T-cell (primary cell): ENCODE measurements at regions of chr14 and their contacts with region 1.

Region 1: DNA sequence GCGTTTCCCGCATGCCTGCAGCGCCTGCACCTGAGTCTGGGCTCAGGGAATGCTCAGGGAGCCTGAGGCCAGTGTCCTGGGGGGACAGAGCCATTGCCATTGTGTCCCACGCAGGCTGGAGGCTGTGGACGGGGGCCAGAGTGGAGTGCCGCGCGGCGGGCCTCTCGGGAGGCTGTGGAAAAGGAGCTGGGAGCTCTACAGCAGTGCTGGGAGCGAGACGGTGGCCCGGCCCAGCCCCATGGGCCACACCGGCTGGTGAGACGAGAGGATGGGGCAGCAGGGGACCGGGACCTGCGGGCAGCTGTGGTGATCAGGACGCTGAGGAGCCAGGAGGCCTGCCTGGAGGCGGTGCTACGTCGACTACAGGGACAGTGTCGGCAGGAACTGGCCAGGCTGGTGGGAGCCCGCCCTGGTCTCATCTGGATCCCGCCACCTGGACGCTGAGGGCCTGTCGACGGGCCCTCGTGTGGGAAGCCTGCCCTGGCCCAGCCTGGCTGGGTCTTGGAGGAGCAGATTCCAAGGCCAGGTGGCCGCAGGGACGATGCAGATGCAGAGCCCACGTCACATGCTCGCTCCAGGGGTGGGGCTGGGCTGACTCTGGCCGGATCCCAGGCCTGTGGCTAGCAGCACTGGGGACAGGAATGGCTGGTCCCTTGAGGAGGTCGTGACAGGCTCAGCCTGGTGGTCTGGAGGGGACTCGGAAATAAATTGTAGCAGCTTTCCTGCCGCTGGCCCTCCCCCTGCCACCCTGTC is 7.6 kb downstream of the TEDC1 start:
- DNase-seq: no peak
- ATAC-seq: peak in 1 of 4 experiments; percentile 6
- H3K4me3 ChIP-seq: no peak overlapping the region
- H3K4me3 Mint-ChIP-seq: no peak overlapping the region
- H3K27ac ChIP-seq: no peak overlapping the region
- H3K27ac Mint-ChIP-seq: no peak overlapping the region
- H3K4me1 ChIP-seq: no peaks in the 10 kb centered on the region
- H3K4me1 Mint-ChIP-seq: no peaks in the 10 kb centered on the region
- H3K27me3 ChIP-seq: no peaks in the 10 kb centered on the region
- H3K27me3 Mint-ChIP-seq: peaks cover 3% of the 10 kb centered on the region in 2 donors

Region 2: DNA sequence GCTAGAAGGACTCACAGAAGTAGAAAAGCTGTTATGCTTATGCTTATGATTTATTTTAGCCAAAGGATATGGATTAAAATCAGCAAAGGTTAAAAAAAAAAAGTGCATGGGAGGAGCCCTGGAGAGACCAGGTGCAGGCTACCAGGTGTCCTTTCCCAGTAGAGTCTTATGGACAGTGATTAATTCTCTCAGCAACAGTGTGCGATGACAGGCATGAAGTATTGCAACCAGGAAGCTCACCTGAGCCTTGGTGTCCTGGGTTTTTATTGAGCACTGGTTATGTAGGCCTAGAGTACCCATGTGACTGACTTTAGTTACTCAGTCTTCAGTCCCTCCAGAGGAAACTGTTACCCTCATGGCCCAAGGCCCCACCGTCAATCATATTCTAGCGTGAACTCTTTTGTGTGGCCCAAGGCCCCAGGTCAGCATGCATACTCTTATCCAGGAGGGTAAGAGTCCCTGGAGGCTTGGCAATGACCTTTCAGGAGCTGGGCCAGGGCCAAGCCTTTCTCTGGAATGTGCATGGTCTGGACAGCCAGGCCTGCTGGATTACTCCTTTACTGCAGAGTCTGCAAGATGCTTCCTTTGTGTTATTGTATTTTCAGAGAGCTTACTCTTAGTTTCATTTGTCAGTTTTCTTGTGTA is 1486.7 kb before region 1 on chr14:
- CTCF ChIA-PET with region 1: no interaction called
- POLR2A ChIA-PET with region 1: no interaction called
- DNase-seq: no peak
- ATAC-seq: no peak
- H3K4me3 ChIP-seq: no peak overlapping the region
- H3K4me3 Mint-ChIP-seq: no peak overlapping the region
- H3K27ac ChIP-seq: no peak overlapping the region
- H3K27ac Mint-ChIP-seq: no peak overlapping the region
- H3K4me1 ChIP-seq: no peaks in the 10 kb centered on the region
- H3K4me1 Mint-ChIP-seq: no peaks in the 10 kb centered on the region
- H3K27me3 ChIP-seq: peaks cover 0 to 9% of the 10 kb centered on the region in 2 experiments
- H3K27me3 Mint-ChIP-seq: peaks cover 15 to 20% of the 10 kb centered on the region in 2 donors

Region 3: GRCh38 chr14:105351920-105352851 is 146.5 kb before region 1 on chr14:
- CTCF ChIA-PET with region 1: no interaction called
- POLR2A ChIA-PET with region 1: no interaction called
- DNase-seq: peak; percentile 75 to 92 (median 85)
- ATAC-seq: peak; percentile 95 to 99 (median 99)
- H3K4me3 ChIP-seq: no peak overlapping the region
- H3K4me3 Mint-ChIP-seq: no peak overlapping the region
- H3K27ac ChIP-seq: no peak overlapping the region
- H3K27ac Mint-ChIP-seq: peak overlapping the region; percentile 20 to 68
- H3K4me1 ChIP-seq: peaks cover 0 to 5% of the 10 kb centered on the region in 2 experiments
- H3K4me1 Mint-ChIP-seq: peaks cover 0 to 3% (median 3%) of the 10 kb centered on the region in 3 donors
- H3K27me3 ChIP-seq: no peaks in the 10 kb centered on the region
- H3K27me3 Mint-ChIP-seq: no peaks in the 10 kb centered on the region

Region 4: DNA sequence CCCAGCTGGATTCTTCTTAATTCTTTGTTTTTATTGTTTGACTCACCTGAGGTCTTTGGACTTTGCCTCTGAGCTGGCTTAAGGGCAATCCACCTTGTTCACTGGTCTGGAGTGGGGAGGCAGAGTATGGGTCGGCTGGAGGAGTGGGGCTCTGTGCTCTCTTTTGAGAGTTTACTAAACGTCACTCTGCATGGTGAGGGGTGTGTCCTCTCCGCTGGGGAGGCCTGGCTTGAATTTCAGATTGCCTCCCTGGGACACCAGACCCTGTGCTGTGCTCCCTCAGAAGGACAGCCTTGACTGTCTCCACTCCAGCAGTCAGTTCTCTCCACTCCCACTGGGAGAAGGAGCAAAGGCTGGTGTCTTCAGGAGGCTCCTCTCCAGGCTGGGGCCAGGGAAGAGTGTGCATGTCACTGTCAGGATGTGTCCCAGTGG is 81.0 kb before region 1 on chr14:
- CTCF ChIA-PET with region 1: no interaction called
- POLR2A ChIA-PET with region 1: interaction called in 1 of 2 experiments, 11 read pairs
- DNase-seq: no peak
- ATAC-seq: no peak
- H3K4me3 ChIP-seq: no peak overlapping the region
- H3K4me3 Mint-ChIP-seq: peak overlapping the region; percentile 34 to 64 (median 37)
- H3K27ac ChIP-seq: no peak overlapping the region
- H3K27ac Mint-ChIP-seq: no peak overlapping the region
- H3K4me1 ChIP-seq: peaks cover 7 to 44% of the 10 kb centered on the region in 2 experiments
- H3K4me1 Mint-ChIP-seq: peaks cover 29 to 36% (median 29%) of the 10 kb centered on the region in 3 donors
- H3K27me3 ChIP-seq: peaks cover 0 to 45% of the 10 kb centered on the region in 2 experiments
- H3K27me3 Mint-ChIP-seq: peaks cover 5 to 12% of the 10 kb centered on the region in 2 donors

Region 5: GRCh38 chr14:105480952-105481801 is 17.5 kb before region 1 on chr14:
- CTCF ChIA-PET with region 1: no interaction called
- POLR2A ChIA-PET with region 1: no interaction called
- DNase-seq: peak; percentile 69 to 96 (median 85)
- ATAC-seq: peak; percentile 43 to 60 (median 54)
- H3K4me3 ChIP-seq: peak overlapping the region; percentile 20 to 55
- H3K4me3 Mint-ChIP-seq: peak overlapping the region; percentile 72 to 79 (median 74)
- H3K27ac ChIP-seq: peak overlapping the region; percentile 100
- H3K27ac Mint-ChIP-seq: peak overlapping the region; percentile 99 to 100
- H3K4me1 ChIP-seq: peaks cover 33 to 98% of the 10 kb centered on the region in 2 experiments
- H3K4me1 Mint-ChIP-seq: peaks cover 54 to 69% (median 59%) of the 10 kb centered on the region in 3 donors
- H3K27me3 ChIP-seq: peaks cover 0 to 18% of the 10 kb centered on the region in 2 experiments
- H3K27me3 Mint-ChIP-seq: peaks cover 0 to 3% of the 10 kb centered on the region in 2 donors

Region 6: DNA sequence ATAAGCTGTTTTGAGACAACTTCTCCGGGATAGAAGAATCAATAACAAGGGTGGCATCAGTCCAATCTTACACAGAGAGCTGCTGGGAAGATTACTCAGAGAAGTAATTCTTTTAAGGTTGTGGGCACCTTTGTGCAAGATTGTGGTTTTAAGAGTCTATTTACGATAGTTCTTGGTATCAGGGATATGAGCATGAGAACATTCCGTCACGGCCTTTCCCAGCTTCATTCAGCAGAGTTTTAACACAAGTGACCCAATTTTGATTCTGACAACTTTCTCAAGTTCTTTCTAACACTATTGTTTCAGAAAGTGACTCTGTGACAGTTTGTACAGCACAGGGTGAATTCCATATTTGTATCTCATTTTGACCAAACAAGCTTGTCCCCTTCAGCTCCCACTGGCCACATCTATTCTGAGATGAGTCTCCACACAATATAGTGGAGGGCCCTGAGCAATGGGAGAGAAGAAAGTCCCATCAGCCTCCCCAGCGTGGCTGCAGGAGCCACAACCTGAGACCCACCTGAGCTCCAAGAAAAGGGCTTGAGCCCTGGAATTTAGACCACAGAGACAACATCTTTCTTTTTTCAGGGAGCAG is 896.9 kb after region 1 on chr14:
- CTCF ChIA-PET with region 1: no interaction called
- POLR2A ChIA-PET with region 1: no interaction called
- DNase-seq: peak in 10 of 35 experiments; percentile 4 to 56 (median 24)
- ATAC-seq: peak in 3 of 4 experiments; percentile 18 to 69 (median 45)
- H3K4me3 ChIP-seq: no peak overlapping the region
- H3K4me3 Mint-ChIP-seq: peak overlapping the region in 2 of 3 donors; percentile 35 to 73
- H3K27ac ChIP-seq: peak overlapping the region; percentile 30
- H3K27ac Mint-ChIP-seq: peak overlapping the region; percentile 56 to 88
- H3K4me1 ChIP-seq: peaks cover 8 to 14% of the 10 kb centered on the region in 2 experiments
- H3K4me1 Mint-ChIP-seq: peaks cover 25 to 56% (median 32%) of the 10 kb centered on the region in 3 donors
- H3K27me3 ChIP-seq: peaks cover 0 to 16% of the 10 kb centered on the region in 2 experiments
- H3K27me3 Mint-ChIP-seq: peaks cover 10 to 18% of the 10 kb centered on the region in 2 donors